ENCODE measurements at regions of chr11 and their contacts with region 1.

Region 1: DNA sequence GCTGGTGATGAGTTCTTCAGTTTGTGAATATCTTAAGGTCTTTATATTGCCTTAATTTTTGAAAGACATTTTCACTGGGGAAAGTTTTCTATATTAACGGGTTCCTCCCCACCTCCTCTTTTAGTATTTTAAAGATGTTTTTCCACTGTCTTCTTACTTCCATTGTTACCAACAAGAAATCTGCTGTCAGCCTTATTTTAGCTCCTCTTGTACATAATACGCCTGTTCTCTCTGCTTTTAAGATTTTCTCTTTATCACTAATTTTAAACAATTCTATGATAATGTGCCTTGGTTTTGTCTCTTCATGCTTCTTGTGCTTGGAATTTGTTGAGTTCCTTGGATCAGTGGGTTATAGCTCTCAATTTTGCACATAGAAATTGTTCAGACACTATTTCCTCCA is 280.4 kb downstream of the DCDC1 start:
- DNase-seq: no peak
- H3K4me3 Mint-ChIP-seq: no peak overlapping the region
- H3K27ac Mint-ChIP-seq: no peak overlapping the region
- H3K4me1 Mint-ChIP-seq: no peaks in the 10 kb centered on the region
- H3K27me3 Mint-ChIP-seq: no peaks in the 10 kb centered on the region
- CTCF ChIP-seq: no peak

Region 2: DNA sequence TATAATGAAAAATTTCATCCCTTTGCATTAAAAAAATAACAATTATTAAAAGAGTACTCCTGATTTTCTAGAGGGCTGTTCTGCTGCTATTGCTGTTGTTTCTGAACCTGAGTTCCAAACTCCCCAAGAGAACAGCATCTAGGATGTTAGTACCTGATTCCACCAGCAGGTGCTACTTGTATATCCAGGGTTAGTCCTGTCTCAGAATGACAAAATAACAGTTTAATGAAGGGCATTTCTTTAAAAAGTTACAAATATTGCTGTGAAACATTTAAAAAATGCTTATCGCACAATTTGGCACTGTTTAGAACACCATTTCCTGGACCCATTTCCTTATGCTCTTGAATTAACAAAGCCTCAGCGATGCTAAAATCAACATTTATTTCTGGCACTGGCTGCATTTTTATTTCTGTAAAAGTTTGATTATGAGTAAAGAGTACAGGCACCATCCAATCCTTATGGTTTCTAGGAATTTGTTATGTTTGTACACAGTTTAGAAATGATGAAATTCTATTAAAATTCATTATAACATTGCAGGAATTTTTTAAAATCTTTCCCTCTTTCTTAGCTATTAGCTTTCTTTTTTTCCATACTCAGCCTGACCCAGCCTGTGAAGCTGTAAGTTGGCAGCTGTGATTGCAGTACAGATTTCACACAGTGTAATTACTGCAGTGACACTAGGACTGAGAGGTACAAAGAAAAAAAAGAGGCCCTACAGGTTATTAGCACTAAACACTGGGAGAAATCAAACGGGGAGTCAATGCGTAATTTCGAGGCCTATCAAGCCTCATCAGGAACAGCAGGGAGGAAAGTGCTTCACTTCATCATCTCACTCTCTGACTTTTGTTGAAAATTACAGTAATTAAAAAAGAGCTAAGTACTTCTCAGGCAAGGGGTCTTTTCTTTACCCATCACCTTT is 71.6 kb after region 1 on chr11:
- CTCF ChIA-PET with region 1: no interaction called
- POLR2A ChIA-PET with region 1: no interaction called
- intact Hi-C with region 1: loop called (anchors 2 kb)
- DNase-seq: peak; percentile 36
- H3K4me3 Mint-ChIP-seq: no peak overlapping the region
- H3K27ac Mint-ChIP-seq: no peak overlapping the region
- H3K4me1 Mint-ChIP-seq: no peaks in the 10 kb centered on the region
- H3K27me3 Mint-ChIP-seq: peaks cover 32% of the 10 kb centered on the region
- CTCF ChIP-seq: peak; percentile 38

Measured in MCF 10A (cell line).